ENCODE measurements at regions of chr9 and their contacts with region 1.

Region 1: GRCh38 chr9:10366171-10366779 is 246.5 kb downstream of the PTPRD start:
- DNase-seq: peak; percentile 59
- H3K4me3 Mint-ChIP-seq: no peak overlapping the region
- H3K27ac Mint-ChIP-seq: no peak overlapping the region
- H3K4me1 Mint-ChIP-seq: no peaks in the 10 kb centered on the region
- H3K27me3 Mint-ChIP-seq: peaks cover 80% of the 10 kb centered on the region
- CTCF ChIP-seq: peak; percentile 70

Region 2: DNA sequence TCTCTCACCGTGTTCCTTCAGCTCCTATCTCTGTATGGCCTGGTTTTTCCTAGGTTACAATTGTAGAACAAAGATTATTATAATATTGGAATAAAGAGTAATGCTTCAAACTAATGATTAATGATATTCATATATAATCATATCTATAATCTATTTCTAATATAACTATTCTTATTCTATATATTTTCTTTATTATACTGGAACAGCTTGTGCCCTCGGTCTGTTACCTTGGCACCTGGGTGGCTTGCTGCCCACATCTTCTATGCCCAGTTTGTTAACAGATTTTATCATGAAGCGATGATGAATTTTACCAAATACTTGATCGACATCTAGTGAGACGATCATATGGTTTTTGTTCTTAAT is 1963.3 kb after region 1 on chr9:
- CTCF ChIA-PET with region 1: no interaction called
- POLR2A ChIA-PET with region 1: no interaction called
- intact Hi-C with region 1: loop called (anchors 2 kb)
- DNase-seq: no peak
- H3K4me3 Mint-ChIP-seq: no peak overlapping the region
- H3K27ac Mint-ChIP-seq: no peak overlapping the region
- H3K4me1 Mint-ChIP-seq: no peaks in the 10 kb centered on the region
- H3K27me3 Mint-ChIP-seq: peaks cover 44% of the 10 kb centered on the region
- CTCF ChIP-seq: no peak